Esophagus squamous epithelium (tissue), 5 donors: ENCODE measurements at regions of chr13 and their contacts with region 1.

Region 1: DNA sequence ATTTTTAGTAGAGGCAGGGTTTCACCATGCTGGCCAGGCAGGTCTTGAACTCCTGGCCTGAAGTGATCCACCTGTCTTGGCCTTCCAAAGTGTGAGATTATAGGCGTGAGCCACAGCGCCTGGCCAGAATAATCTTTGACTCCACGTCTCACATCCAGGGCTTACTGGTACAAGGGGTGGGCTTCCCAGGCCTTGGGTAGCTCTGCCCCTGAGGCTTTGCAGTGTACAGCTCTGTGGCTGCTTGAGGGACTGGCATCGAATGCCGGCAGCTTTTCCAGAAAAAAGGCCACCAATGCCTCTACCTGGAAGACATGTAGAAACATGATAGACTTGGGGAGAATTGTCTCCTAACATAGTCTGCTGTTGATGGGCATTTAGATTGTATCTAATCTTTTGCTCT is 57.8 kb downstream of the NDFIP2 start:
- DNase-seq: no peak
- H3K4me3 ChIP-seq: no peak overlapping the region
- H3K27ac ChIP-seq: no peak overlapping the region
- H3K4me1 ChIP-seq: peaks cover 0 to 7% (median 0%) of the 10 kb centered on the region in 3 donors
- H3K27me3 ChIP-seq: no peaks in the 10 kb centered on the region
- CTCF ChIP-seq: no peak
- POLR2A ChIP-seq: no peak

Region 2: DNA sequence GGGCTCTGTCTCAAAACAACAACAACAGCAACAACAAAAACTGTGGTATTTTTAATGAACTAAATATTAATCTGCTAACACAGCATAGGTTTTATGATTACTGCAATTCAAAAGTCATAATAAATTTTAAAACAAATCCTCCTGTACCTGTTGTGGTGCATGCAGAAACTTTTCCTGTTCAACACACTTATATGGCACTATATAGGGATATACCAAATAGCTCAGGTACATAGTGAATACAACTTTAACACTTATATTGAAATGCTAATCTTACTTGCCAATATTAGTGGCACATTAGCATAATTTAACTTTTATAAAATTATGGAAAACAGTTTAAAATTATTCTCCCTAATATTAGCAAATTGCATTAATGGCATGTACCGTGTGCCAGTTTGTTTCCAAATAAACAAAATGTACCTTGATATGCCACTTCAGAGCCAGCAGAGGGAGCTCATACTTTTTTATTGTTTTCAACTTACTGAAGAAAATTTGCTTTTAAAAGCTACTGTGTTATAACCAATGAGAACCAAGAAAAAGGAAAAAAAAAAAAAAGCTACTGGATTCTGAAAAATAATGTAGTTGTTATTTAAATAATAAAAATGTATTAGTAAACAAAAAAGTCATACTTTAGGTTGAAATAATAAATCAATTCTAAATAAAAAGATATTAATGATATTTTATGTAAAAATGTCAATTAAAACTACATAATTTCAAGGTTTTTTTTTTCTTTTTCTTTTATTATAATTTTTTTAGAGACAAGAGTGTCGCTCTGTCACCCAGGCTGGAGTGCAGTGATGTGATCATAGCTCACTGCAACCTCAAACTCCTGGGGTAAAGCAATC is 114.7 kb before region 1 on chr13:
- intact Hi-C with region 1: loop called (anchors 5 kb)
- DNase-seq: no peak
- H3K4me3 ChIP-seq: no peak overlapping the region
- H3K27ac ChIP-seq: no peak overlapping the region
- H3K4me1 ChIP-seq: peaks cover 0 to 4% (median 0%) of the 10 kb centered on the region in 3 donors
- H3K27me3 ChIP-seq: no peaks in the 10 kb centered on the region
- CTCF ChIP-seq: peak; percentile 48 to 79 (median 64)
- POLR2A ChIP-seq: no peak